ENCODE measurements at regions of chr1 and their contacts with region 1.

Region 1: GRCh38 chr1:198113342-198113750 is 43.5 kb upstream of the NEK7 start:
- DNase-seq: no peak
- H3K4me3 ChIP-seq: no peak overlapping the region
- H3K27ac ChIP-seq: no peak overlapping the region
- H3K4me1 ChIP-seq: no peaks in the 10 kb centered on the region
- CTCF ChIP-seq: no peak

Region 2: GRCh38 chr1:197955486-197956394 is 157.6 kb before region 1 on chr1:
- CTCF ChIA-PET with region 1: no interaction called
- POLR2A ChIA-PET with region 1: no interaction called
- intact Hi-C with region 1: no loop called
- DNase-seq: no peak
- H3K4me3 ChIP-seq: no peak overlapping the region
- H3K27ac ChIP-seq: no peak overlapping the region
- H3K4me1 ChIP-seq: no peaks in the 10 kb centered on the region
- CTCF ChIP-seq: no peak

Region 3: GRCh38 chr1:198096390-198096789 is 17.0 kb before region 1 on chr1:
- CTCF ChIA-PET with region 1: no interaction called
- POLR2A ChIA-PET with region 1: no interaction called
- intact Hi-C with region 1: no loop called
- DNase-seq: no peak
- H3K4me3 ChIP-seq: no peak overlapping the region
- H3K27ac ChIP-seq: no peak overlapping the region
- H3K4me1 ChIP-seq: no peaks in the 10 kb centered on the region
- CTCF ChIP-seq: no peak

Region 4: GRCh38 chr1:198352975-198353695 is 239.8 kb after region 1 on chr1:
- CTCF ChIA-PET with region 1: no interaction called
- POLR2A ChIA-PET with region 1: interaction called, 12 read pairs
- intact Hi-C with region 1: no loop called
- DNase-seq: no peak
- H3K4me3 ChIP-seq: no peak overlapping the region
- H3K27ac ChIP-seq: no peak overlapping the region
- H3K4me1 ChIP-seq: no peaks in the 10 kb centered on the region
- CTCF ChIP-seq: no peak